ENCODE measurements at regions of chr2 and their contacts with region 1.

Region 1: GRCh38 chr2:38508311-38509039 is 94.3 kb downstream of the HNRNPLL start:
- DNase-seq: peak; percentile 79 to 95 (median 80)
- ATAC-seq: peak; percentile 87
- H3K4me3 ChIP-seq: no peak overlapping the region
- H3K27ac ChIP-seq: peak overlapping the region; percentile 21; the same call in 1 of the 3 replicates
- H3K4me1 ChIP-seq: peaks cover 15 to 27% of the 10 kb centered on the region in 2 experiments
- H3K27me3 ChIP-seq: no peaks in the 10 kb centered on the region
- CTCF ChIP-seq: peak; percentile 78 to 88 (median 87)
- EP300 ChIP-seq: 0 out of 2 replicates have a peak, but pooled peaks have one; percentile 18
- POLR2A ChIP-seq: no peak
- RAD21 ChIP-seq: peak; percentile 85 to 90

Region 2: DNA sequence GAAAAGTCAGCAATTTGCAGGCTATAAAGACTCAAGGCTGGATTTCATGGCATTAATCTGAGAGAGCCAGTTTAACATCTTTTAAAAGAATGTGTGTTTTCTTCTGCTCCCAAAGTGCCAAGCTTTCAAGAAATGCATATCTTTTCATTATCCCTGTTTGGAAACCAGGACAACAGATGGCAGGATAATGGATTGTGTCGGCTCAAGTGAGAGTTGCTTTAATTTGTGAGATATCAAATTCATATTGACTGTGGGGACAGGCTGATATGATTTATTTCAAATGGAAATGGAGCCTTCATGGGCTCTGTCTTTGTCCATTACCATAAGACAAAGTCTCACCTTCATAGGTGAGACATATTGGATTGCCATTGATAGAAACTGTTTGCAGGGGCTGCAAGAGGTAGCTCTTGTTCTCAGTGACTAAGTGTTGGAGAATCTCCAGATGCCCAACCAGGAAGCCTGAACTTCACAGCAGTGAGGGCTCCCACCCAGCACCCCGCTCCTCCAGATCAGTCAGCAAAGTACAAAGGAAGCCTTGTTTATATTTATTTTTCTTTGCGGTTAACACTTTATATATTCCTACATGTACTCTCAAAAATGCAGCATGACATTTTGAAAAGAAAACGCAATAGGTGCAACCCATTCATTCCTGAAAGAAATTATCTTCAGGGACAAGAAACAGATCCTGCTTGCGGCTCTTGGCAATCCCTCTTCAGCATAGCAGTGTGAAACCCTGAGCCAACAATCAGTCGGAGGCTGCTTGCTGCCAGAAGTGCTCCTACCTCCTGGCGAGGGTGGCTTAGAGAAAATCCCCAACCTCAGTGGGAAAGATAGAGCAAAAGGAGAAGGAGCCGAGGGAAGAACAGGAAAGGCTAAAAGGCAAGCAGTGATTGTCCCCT is 65.6 kb before region 1 on chr2:
- CTCF ChIA-PET with region 1: no interaction called
- POLR2A ChIA-PET with region 1: no interaction called
- in situ Hi-C with region 1: no loop called
- intact Hi-C with region 1: loop called (anchors 5 kb)
- DNase-seq: no peak
- ATAC-seq: no peak
- H3K4me3 ChIP-seq: no peak overlapping the region
- H3K27ac ChIP-seq: no peak overlapping the region
- H3K4me1 ChIP-seq: peaks cover 0 to 20% of the 10 kb centered on the region in 2 experiments; a peak in 4 of 5 replicates
- H3K27me3 ChIP-seq: peaks cover 8 to 19% of the 10 kb centered on the region in 2 experiments; a peak in 4 of 5 replicates
- CTCF ChIP-seq: no peak
- EP300 ChIP-seq: no peak
- POLR2A ChIP-seq: no peak
- RAD21 ChIP-seq: no peak

Measured in K562 (cell line).